ENCODE measurements at regions of chr14 and their contacts with region 1.

Region 1: GRCh38 chr14:90331497-90332435 is at the start of gene NRDE2:
- DNase-seq: peak; percentile 100
- ATAC-seq: peak; percentile 100
- total RNA-seq, gene NRDE2: 11.2 TPM

Region 2: DNA sequence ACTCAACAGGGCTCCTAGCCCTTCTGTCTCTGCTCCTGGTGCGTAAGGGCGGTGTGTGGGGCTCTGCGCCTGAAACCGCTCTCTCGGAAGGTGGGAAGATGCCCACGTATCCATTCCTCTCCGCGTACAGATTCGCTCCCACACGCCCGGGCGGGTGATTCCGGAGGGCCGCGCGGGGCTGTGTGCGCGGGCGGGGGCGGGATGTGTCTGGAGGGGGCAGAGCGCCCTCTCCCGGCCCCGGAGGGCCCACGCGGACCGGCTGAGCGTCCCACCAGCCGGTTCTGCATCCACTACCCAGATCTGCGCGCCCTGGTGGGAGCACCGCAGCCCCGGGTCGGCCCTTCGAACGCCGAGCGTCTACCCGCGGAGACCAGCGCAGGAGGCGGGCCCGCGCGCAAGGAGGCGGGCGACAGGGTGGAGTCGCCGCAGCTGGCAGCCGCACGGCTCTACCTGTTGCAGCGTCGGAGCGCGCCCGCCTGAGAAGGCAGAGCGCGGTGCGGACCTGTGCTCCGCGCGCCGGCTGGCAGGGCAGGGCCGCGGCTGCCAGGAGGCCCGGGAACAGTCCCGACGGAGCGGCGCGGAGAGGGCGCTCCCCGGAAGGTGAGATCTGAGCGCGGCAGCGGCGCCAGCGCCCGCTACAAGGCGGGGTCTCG is 271.3 kb before region 1 on chr14:
- intact Hi-C with region 1: no loop called
- DNase-seq: peak; percentile 72
- ATAC-seq: peak; percentile 90

Region 3: DNA sequence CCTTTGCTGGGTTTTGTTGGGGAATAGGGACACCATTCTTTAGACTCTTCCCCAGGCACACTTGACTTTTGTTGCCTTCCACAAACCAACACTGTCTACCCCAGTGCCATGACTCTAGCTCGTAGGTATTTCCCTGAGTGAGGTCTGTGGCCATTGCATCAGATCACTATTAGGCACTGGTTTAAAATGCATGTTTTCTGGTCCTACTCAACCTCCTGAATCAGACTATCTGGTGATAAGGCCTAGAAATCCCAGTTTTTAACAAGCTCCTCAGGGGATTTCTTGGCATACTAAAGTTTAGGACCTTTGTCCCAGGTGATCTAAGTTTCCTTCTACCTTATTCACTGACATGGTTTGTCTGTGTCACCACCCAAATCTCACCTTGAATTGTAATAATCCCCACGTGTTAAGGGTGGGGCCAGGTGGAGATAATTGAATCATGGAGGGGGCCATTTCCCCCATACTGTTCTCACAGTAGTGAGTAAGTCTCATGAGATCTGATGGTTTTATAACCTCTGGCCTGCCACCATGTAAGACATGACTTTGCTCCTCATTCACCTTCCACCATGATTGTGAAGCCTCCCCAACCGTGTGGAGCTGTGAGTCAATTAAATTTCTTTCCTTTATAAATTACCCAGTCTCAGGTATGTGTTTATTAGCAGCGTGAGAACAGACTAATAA is 163.2 kb before region 1 on chr14:
- intact Hi-C with region 1: no loop called
- DNase-seq: no peak
- ATAC-seq: no peak

Region 4: DNA sequence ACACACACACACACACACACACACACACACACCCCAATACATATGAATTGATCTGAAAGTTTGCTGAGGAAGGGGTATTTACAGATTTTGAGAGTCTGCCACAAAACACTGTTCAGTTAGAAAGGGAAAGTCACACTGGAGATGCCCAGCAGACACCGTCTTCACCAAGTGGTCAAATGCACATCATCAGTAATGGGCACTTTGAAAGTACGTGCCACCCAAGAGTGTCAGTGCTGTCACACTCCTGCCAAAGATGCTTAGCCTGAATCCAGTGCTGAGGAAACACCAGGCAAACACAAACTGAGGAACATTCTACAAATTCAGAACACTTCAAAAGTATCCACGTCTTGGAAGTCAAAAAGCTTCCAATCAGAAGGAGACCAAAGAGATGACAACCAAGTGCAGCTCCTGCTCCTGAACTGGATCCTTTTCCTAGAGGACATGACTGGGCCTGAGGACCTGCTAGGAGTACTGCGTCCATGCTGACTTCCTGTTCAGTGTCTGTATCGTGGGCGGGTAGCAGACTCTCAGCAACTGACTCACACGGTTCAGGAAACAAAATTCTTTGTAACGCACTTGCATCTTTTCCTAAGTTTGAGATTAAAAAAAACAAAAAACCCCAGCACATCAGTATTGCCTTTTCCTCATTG is 56.8 kb before region 1 on chr14:
- intact Hi-C with region 1: no loop called
- DNase-seq: no peak
- ATAC-seq: no peak

Region 5: GRCh38 chr14:90383075-90383730 is 51.4 kb after region 1 on chr14:
- intact Hi-C with region 1: loop called (anchors 1 kb)
- DNase-seq: peak; percentile 100
- ATAC-seq: peak; percentile 95

Measured in Right ventricle myocardium inferior (tissue), 1 donor.